B cell (primary cell): ENCODE measurements at regions of chr7 and their contacts with region 1.

Region 1: DNA sequence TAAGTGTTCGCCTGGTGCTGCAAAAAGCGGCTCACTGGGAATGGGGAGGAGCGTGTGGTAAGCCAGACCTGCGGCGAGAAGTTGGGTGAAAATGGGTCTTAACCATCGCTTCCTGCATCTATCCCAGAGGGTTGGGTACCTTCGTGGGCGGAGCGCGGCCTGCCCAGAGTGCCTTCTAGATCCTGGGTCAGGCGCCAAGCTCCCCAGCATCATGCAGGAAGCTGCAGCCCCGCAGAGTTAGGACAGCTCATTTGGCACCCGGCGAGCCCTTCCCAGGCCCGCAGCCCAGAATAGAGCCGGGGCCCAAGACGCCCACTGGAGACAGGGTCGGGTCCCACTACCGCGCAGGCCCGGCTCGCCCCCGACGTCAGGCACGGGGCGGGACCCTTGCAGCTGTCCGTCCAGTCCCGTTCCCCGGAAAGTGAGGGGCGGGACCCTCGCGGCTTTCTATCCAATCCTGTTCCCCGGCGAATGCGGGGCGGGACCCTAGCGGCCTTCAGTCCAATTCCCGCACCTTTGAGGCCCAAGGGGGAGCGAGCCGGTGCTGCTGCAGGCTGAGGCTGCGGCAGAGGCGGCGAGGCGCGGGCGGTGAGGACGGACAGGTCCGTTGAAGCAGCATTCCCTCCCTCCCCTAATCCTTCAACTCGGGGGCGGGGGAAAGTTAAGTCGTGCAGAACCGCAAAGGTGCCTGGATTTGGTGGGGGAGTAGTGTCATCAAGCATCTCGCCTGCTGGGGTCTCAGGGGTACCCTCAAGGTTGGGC is at the start of gene CROT:
- DNase-seq: peak; percentile 94
- ATAC-seq: peak; percentile 98
- H3K4me3 ChIP-seq: peak within 1 kb of the TSS; percentile 51 to 86 (median 73)
- H3K4me3 Mint-ChIP-seq: peak within 1 kb of the TSS; percentile 97
- H3K27ac ChIP-seq: peak within 1 kb of the TSS; percentile 67 to 74
- H3K27ac Mint-ChIP-seq: peak within 1 kb of the TSS; percentile 94
- H3K4me1 ChIP-seq: peaks cover 6 to 15% of the 10 kb centered on the region in 2 donors
- H3K4me1 Mint-ChIP-seq: peaks cover 27% of the 10 kb centered on the region
- H3K27me3 ChIP-seq: no peaks in the 10 kb centered on the region
- H3K27me3 Mint-ChIP-seq: no peaks in the 10 kb centered on the region
- CTCF ChIP-seq: no peak
- total RNA-seq, gene CROT: 12.4 and 13.3 TPM in 2 replicates

Region 2: GRCh38 chr7:87059525-87060287 is 285.6 kb before region 1 on chr7 and contains the start of gene ELAPOR2:
- CTCF ChIA-PET with region 1: no interaction called
- POLR2A ChIA-PET with region 1: no interaction called
- intact Hi-C with region 1: loop called (anchors 2 kb)
- DNase-seq: peak; percentile 91
- ATAC-seq: peak; percentile 95
- H3K4me3 ChIP-seq: peak within 1 kb of the TSS; percentile 42 to 79 (median 66)
- H3K4me3 Mint-ChIP-seq: peak within 1 kb of the TSS; percentile 90
- H3K27ac ChIP-seq: peak within 1 kb of the TSS in 1 of 2 donors; percentile 56
- H3K27ac Mint-ChIP-seq: peak within 1 kb of the TSS; percentile 77
- H3K4me1 ChIP-seq: peaks cover 12 to 14% of the 10 kb centered on the region in 2 donors
- H3K4me1 Mint-ChIP-seq: peaks cover 15% of the 10 kb centered on the region
- H3K27me3 ChIP-seq: peaks cover 0 to 3% (median 0%) of the 10 kb centered on the region in 4 experiments
- H3K27me3 Mint-ChIP-seq: no peaks in the 10 kb centered on the region
- CTCF ChIP-seq: peak; percentile 67
- total RNA-seq, gene ELAPOR2: 8.3 and 11.1 TPM in 2 replicates

Region 3: DNA sequence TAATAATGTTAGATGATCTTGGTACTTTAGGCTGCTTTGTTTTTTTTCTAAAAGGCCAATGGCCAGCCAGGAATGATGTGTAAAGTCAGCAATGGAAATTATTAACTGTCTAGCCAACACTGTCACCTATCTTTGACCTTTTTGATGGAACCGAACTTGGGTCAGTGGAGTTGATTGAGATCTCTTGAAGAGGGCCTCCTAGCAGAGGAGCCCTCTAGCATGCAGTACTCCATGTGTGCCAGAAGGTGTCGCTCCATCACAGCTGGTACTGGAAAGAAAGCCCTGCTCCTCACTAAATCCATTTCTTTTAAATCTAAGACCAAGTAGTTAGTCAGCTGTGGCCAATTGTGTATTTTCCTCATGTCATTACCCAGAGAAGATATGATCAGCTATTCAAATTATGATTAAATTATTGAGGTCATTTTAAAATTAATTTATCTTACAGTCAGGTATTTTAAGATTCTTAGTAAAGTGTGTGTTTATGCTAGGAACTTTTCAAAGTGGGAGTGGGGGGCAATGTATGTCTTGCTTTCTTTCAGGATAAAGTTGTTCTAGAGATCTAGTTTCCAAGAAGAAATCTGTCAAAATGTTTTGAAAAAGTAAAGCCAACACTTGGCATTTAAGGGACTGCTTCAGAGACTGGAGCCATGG is 33.0 kb before region 1 on chr7:
- CTCF ChIA-PET with region 1: interaction called, 3 read pairs
- POLR2A ChIA-PET with region 1: no interaction called
- intact Hi-C with region 1: loop called (anchors 1 kb)
- DNase-seq: peak; percentile 70
- ATAC-seq: peak; percentile 97
- H3K4me3 ChIP-seq: no peak overlapping the region
- H3K4me3 Mint-ChIP-seq: no peak overlapping the region
- H3K27ac ChIP-seq: no peak overlapping the region
- H3K27ac Mint-ChIP-seq: no peak overlapping the region
- H3K4me1 ChIP-seq: no peaks in the 10 kb centered on the region
- H3K4me1 Mint-ChIP-seq: no peaks in the 10 kb centered on the region
- H3K27me3 ChIP-seq: no peaks in the 10 kb centered on the region
- H3K27me3 Mint-ChIP-seq: no peaks in the 10 kb centered on the region
- CTCF ChIP-seq: peak; percentile 99

Region 4: GRCh38 chr7:87426160-87426559 is 80.8 kb after region 1 on chr7:
- CTCF ChIA-PET with region 1: no interaction called
- POLR2A ChIA-PET with region 1: no interaction called
- intact Hi-C with region 1: no loop called
- DNase-seq: no peak
- ATAC-seq: no peak
- H3K4me3 ChIP-seq: no peak overlapping the region
- H3K4me3 Mint-ChIP-seq: no peak overlapping the region
- H3K27ac ChIP-seq: no peak overlapping the region
- H3K27ac Mint-ChIP-seq: no peak overlapping the region
- H3K4me1 ChIP-seq: peaks cover 0 to 2% of the 10 kb centered on the region in 2 donors
- H3K4me1 Mint-ChIP-seq: peaks cover 19% of the 10 kb centered on the region
- H3K27me3 ChIP-seq: no peaks in the 10 kb centered on the region
- H3K27me3 Mint-ChIP-seq: no peaks in the 10 kb centered on the region
- CTCF ChIP-seq: no peak

Region 5: GRCh38 chr7:87628780-87629569 is 283.6 kb after region 1 on chr7:
- CTCF ChIA-PET with region 1: no interaction called
- POLR2A ChIA-PET with region 1: no interaction called
- intact Hi-C with region 1: loop called (anchors 1 kb)
- DNase-seq: peak; percentile 66
- ATAC-seq: peak; percentile 18
- H3K4me3 ChIP-seq: peak overlapping the region in 4 of 5 experiments; percentile 59 to 80 (median 70)
- H3K4me3 Mint-ChIP-seq: peak overlapping the region; percentile 82
- H3K27ac ChIP-seq: no peak overlapping the region
- H3K27ac Mint-ChIP-seq: no peak overlapping the region
- H3K4me1 ChIP-seq: peaks cover 13 to 17% of the 10 kb centered on the region in 2 donors
- H3K4me1 Mint-ChIP-seq: peaks cover 17% of the 10 kb centered on the region
- H3K27me3 ChIP-seq: peaks cover 0 to 19% (median 8%) of the 10 kb centered on the region in 4 experiments
- H3K27me3 Mint-ChIP-seq: peaks cover 19% of the 10 kb centered on the region
- CTCF ChIP-seq: no peak

Region 6: GRCh38 chr7:87876040-87876868 is 530.9 kb after region 1 on chr7 and contains the starts of genes DBF4 and SLC25A40:
- CTCF ChIA-PET with region 1: no interaction called
- POLR2A ChIA-PET with region 1: no interaction called
- intact Hi-C with region 1: loop called (anchors 1 kb)
- DNase-seq: peak; percentile 98
- ATAC-seq: peak; percentile 92
- H3K4me3 ChIP-seq: peak within 1 kb of the TSS; percentile 73 to 98 (median 93)
- H3K4me3 Mint-ChIP-seq: peak within 1 kb of the TSS; percentile 76
- H3K27ac ChIP-seq: peak within 1 kb of the TSS; percentile 83 to 93
- H3K27ac Mint-ChIP-seq: peak within 1 kb of the TSS; percentile 98
- H3K4me1 ChIP-seq: peaks cover 18 to 24% of the 10 kb centered on the region in 2 donors
- H3K4me1 Mint-ChIP-seq: peaks cover 37% of the 10 kb centered on the region
- H3K27me3 ChIP-seq: no peaks in the 10 kb centered on the region
- H3K27me3 Mint-ChIP-seq: no peaks in the 10 kb centered on the region
- CTCF ChIP-seq: no peak
- total RNA-seq, gene DBF4: 21.0 and 27.6 TPM in 2 replicates
- total RNA-seq, gene SLC25A40: 28.1 and 34.5 TPM in 2 replicates

Region 7: GRCh38 chr7:88219781-88220747 is 874.7 kb after region 1 on chr7 and contains the start of gene SRI:
- CTCF ChIA-PET with region 1: no interaction called
- POLR2A ChIA-PET with region 1: no interaction called
- intact Hi-C with region 1: loop called (anchors 2 kb)
- DNase-seq: peak; percentile 94
- ATAC-seq: peak; percentile 96
- H3K4me3 ChIP-seq: peak within 1 kb of the TSS; percentile 83 to 91 (median 88)
- H3K4me3 Mint-ChIP-seq: peak within 1 kb of the TSS; percentile 94
- H3K27ac ChIP-seq: peak within 1 kb of the TSS; percentile 68 to 78
- H3K27ac Mint-ChIP-seq: peak within 1 kb of the TSS; percentile 95
- H3K4me1 ChIP-seq: peaks cover 13 to 25% of the 10 kb centered on the region in 2 donors
- H3K4me1 Mint-ChIP-seq: peaks cover 27% of the 10 kb centered on the region
- H3K27me3 ChIP-seq: no peaks in the 10 kb centered on the region
- H3K27me3 Mint-ChIP-seq: no peaks in the 10 kb centered on the region
- CTCF ChIP-seq: peak; percentile 98
- total RNA-seq, gene SRI: 46.9 and 49.9 TPM in 2 replicates